Activated CD8-positive, alpha-beta T cell treated with anti-CD3 and anti-CD28 coated beads for 36 hours (primary cell): ENCODE measurements at regions of chr16 and their contacts with region 1.

Region 1: DNA sequence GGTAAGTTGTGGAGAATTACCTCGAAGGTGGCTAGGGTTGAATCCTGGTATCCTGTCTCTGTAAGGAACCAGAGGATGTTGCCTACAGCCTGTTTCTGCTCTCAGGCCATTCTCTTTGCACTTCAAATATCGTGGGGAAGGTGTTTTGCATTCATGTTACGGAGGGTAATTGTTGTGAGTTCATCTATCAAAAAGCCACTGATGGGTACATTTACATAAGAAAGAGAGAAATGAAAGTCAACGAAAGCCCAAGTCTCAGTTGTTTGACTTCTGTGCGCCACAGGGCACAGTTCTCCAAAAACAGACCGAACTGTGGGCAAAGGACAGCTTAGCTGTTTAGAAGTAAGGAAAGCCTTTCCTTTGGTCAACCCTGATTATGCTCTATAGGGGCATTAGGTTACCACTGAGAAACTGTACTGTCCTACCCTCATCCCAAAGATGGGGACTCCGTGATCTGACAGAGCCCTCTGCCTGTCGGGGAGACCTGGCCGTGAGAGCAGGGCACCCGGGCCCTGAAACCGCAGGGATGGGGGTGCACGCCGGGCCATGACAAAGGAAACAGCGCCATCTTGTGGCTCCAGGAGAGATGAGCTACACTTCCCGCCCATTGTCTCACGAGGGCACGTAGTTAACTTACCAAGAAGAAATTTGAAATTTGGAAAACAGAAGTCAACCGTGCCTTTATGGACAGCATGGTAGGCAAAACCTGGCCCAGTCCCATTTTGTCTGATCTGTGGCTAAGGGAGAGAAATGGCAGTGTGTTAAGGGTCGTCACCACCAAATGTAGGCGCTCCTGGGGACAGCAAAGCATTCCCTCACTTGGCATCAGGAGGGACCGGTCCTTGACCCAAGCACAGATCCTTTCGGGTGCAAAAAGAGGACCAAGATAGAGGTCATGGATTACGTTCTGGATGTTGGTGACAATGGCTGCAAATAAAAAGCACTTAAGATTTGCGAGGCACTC is 74.5 kb upstream of the DYNLRB2 start:
- DNase-seq: peak; percentile 71
- ATAC-seq: peak; percentile 69
- H3K4me3 Mint-ChIP-seq: no peak overlapping the region
- H3K27ac Mint-ChIP-seq: no peak overlapping the region
- H3K4me1 Mint-ChIP-seq: no peaks in the 10 kb centered on the region
- H3K27me3 Mint-ChIP-seq: peaks cover 3% of the 10 kb centered on the region
- CTCF ChIP-seq: peak; percentile 91

Region 2: DNA sequence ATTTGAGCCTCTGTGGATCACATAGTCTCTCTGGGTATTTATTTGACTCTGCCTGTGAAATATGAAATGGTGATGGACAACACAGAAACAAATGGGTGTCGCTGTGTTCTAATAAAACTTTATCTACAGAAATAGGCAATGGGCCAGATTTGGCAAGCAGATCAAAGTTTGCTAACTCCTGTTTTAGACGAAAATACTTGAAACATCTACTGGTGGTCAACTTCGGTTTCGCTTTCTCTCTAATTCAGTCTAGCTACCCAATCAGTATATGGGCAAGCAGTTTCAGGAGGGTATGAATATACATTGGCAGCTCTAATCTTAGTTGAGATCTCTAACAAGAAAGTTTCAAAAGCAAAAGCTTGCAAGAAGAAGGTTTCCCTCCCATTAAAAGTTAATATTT is 14.4 kb after region 1 on chr16:
- CTCF ChIA-PET with region 1: interaction called, 10 read pairs
- POLR2A ChIA-PET with region 1: no interaction called
- intact Hi-C with region 1: no loop called
- DNase-seq: no peak
- ATAC-seq: no peak
- H3K4me3 Mint-ChIP-seq: no peak overlapping the region
- H3K27ac Mint-ChIP-seq: no peak overlapping the region
- H3K4me1 Mint-ChIP-seq: peaks cover 4% of the 10 kb centered on the region
- H3K27me3 Mint-ChIP-seq: peaks cover 11% of the 10 kb centered on the region
- CTCF ChIP-seq: no peak

Region 3: GRCh38 chr16:80540516-80541272 is 74.4 kb after region 1 on chr16 and contains the start of gene DYNLRB2:
- CTCF ChIA-PET with region 1: no interaction called
- POLR2A ChIA-PET with region 1: no interaction called
- intact Hi-C with region 1: no loop called
- DNase-seq: peak; percentile 92
- ATAC-seq: peak; percentile 95
- H3K4me3 Mint-ChIP-seq: peak within 1 kb of the TSS; percentile 96
- H3K27ac Mint-ChIP-seq: peak within 1 kb of the TSS; percentile 98
- H3K4me1 Mint-ChIP-seq: peaks cover 15% of the 10 kb centered on the region
- H3K27me3 Mint-ChIP-seq: peaks cover 1% of the 10 kb centered on the region
- CTCF ChIP-seq: no peak
- total RNA-seq, gene DYNLRB2: not detected